GM18951 (cell line): ENCODE measurements at regions of chr6 and their contacts with region 1.

Region 1: GRCh38 chr6:122530440-122531046 is 58.9 kb upstream of the SERINC1 start:
- POLR2A ChIP-seq: no peak

Region 2: GRCh38 chr6:122399384-122400158 is 131.0 kb before region 1 on chr6 and contains the start of gene HSF2:
- in situ Hi-C with region 1: loop called (anchors 25 kb)
- POLR2A ChIP-seq: peak; percentile 69

Region 3: DNA sequence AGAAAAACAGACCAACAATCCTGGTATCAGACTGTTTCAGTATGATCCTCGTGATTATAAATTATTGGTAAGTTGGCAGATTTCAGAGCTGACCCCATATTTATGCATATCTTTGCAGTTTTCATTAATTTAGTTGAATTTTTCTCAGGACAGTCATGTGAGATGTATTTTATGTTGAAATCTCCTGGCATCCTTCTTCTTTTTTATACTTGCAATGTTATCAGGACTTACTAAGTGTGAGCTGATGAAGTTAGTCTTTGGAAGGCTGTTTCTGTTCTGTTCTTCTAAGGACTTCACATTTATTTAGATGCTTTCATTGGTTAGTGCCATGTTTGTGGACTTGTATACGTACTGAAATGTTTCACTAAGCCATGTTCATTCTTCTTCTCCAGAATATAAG is 275.7 kb after region 1 on chr6:
- in situ Hi-C with region 1: no loop called
- POLR2A ChIP-seq: no peak